Activated CD4-positive, alpha-beta memory T cell treated with anti-CD3 and anti-CD28 coated beads, Interleukin-2, amount 10 ng/mL, durations not matched to agents 7 days and 5 days (primary cell): ENCODE measurements at regions of chr17 and their contacts with region 1.

Region 1: DNA sequence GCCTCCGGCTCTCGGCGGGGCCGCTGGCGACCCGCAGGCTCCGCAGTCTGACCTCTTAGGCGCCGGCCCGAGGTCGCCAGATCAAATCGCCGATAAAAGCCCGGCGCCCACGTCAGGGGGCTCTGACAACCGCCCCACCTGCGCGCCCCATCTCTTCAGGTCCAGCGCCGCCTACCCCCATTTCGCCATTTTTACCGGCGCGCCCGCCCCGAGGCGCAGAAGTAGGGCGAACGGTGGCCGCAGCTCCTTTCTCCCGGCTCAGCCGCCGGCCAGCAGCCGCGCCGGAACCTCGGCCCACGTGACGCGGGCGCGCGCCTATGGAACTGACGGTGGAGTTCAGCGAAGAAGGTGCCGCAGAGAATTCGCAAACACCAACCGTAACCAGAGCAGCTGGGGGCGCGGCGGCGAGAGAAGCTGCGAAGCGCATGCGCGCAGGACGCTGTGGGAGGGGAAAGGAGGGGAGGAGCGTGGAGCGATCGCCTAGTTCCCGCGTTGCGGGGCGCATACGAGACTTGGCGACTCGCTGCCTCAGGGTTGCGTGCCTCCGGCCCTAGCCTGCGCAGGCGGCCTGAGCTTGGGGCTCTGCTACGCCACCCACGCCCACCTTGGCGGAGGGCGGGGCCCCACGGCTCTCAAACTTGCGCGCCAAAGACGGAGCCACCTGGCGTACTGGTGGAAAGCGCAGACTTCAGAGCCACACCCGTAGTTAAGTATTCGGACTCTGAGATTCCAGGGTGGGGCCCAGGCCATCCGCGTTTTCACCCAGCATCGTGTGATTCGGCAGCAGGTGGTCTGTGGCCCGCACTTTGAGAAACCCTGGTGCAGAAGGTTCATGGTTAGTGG is at the start of gene TRIM37:
- DNase-seq: peak; percentile 99
- H3K4me3 Mint-ChIP-seq: peak within 1 kb of the TSS; percentile 98
- H3K27ac Mint-ChIP-seq: peak within 1 kb of the TSS; percentile 91
- H3K4me1 Mint-ChIP-seq: peaks cover 61% of the 10 kb centered on the region
- H3K27me3 Mint-ChIP-seq: no peaks in the 10 kb centered on the region
- total RNA-seq, gene TRIM37: 23.7 to 24.5 TPM

Region 2: DNA sequence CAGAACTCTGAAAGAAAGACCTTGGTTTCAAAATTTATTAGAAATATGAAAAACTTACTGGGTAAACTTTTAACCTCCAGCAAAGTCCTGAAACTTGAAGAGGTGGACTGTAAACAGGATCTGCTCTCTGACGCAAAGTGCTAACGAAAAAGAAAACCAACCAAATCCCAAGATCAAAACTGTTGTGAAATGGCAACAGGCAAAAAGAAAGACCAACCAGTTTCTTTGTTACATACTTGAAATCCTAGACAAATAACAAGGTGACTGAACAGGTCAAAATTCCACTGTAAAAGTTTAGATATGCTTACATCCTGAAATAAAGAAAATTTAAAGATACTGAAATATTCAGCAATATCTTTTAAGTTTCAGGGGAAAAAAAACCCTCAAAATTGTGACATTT is 44.2 kb before region 1 on chr17:
- CTCF ChIA-PET with region 1: no interaction called
- POLR2A ChIA-PET with region 1: no interaction called
- DNase-seq: no peak
- H3K4me3 Mint-ChIP-seq: no peak overlapping the region
- H3K27ac Mint-ChIP-seq: no peak overlapping the region
- H3K4me1 Mint-ChIP-seq: no peaks in the 10 kb centered on the region
- H3K27me3 Mint-ChIP-seq: no peaks in the 10 kb centered on the region

Region 3: GRCh38 chr17:59093702-59094231 is 12.9 kb before region 1 on chr17:
- CTCF ChIA-PET with region 1: interaction called, 3 read pairs
- POLR2A ChIA-PET with region 1: interaction called, 17 read pairs
- DNase-seq: no peak
- H3K4me3 Mint-ChIP-seq: no peak overlapping the region
- H3K27ac Mint-ChIP-seq: no peak overlapping the region
- H3K4me1 Mint-ChIP-seq: peaks cover 14% of the 10 kb centered on the region
- H3K27me3 Mint-ChIP-seq: no peaks in the 10 kb centered on the region

Region 4: GRCh38 chr17:59121850-59122480 is 15.3 kb after region 1 on chr17:
- CTCF ChIA-PET with region 1: interaction called, 6 read pairs
- POLR2A ChIA-PET with region 1: interaction called, 23 read pairs
- DNase-seq: no peak
- H3K4me3 Mint-ChIP-seq: no peak overlapping the region
- H3K27ac Mint-ChIP-seq: no peak overlapping the region
- H3K4me1 Mint-ChIP-seq: peaks cover 9% of the 10 kb centered on the region
- H3K27me3 Mint-ChIP-seq: no peaks in the 10 kb centered on the region

Region 5: GRCh38 chr17:59155439-59156182 is 48.9 kb after region 1 on chr17 and contains the start of gene PRR11:
- CTCF ChIA-PET with region 1: interaction called, 8 read pairs
- POLR2A ChIA-PET with region 1: interaction called, 134 read pairs
- DNase-seq: peak; percentile 96
- H3K4me3 Mint-ChIP-seq: no peak within 1 kb of the TSS
- H3K27ac Mint-ChIP-seq: no peak within 1 kb of the TSS
- H3K4me1 Mint-ChIP-seq: peaks cover 63% of the 10 kb centered on the region
- H3K27me3 Mint-ChIP-seq: no peaks in the 10 kb centered on the region
- total RNA-seq, gene PRR11: 68.2 to 70.6 TPM